ENCODE measurements at regions of chr17 and their contacts with region 1.

Region 1: GRCh38 chr17:2602597-2603017 is 9.2 kb downstream of the PAFAH1B1 start:
- DNase-seq: no peak
- ATAC-seq: peak in 1 of 8 donors; percentile 23
- H3K4me3 ChIP-seq: no peak overlapping the region
- H3K27ac ChIP-seq: no peak overlapping the region
- H3K4me1 ChIP-seq: peaks cover 4 to 84% (median 72%) of the 10 kb centered on the region in 9 donors
- H3K27me3 ChIP-seq: no peaks in the 10 kb centered on the region
- CTCF ChIP-seq: no peak

Region 2: GRCh38 chr17:2468270-2468669 is 134.3 kb before region 1 on chr17:
- intact Hi-C with region 1: no loop called
- DNase-seq: no peak
- ATAC-seq: no peak
- H3K4me3 ChIP-seq: no peak overlapping the region
- H3K27ac ChIP-seq: no peak overlapping the region
- H3K4me1 ChIP-seq: peaks cover 0 to 4% (median 0%) of the 10 kb centered on the region in 9 donors
- H3K27me3 ChIP-seq: no peaks in the 10 kb centered on the region
- CTCF ChIP-seq: no peak

Region 3: DNA sequence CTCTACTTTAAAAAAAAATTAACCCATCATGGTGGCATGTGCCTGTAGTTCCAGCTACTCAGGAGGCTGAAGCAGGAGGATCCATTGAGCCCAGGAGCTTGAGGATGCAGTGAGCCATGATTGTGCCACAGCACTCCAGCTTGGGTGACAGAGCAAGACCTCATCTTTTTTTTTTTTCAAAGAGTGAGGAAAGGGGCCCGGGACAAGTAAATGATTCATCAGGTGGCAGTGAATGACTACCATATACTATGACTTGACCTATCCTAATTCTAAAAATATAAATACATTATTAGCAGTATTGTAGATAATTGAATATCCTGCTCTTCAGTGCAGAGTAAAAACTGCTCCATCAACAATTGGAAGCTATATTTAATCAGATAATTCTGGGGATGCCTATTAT is 53.7 kb after region 1 on chr17:
- intact Hi-C with region 1: loop called in 3 of 10 experiments (anchors 10 kb)
- DNase-seq: no peak
- ATAC-seq: no peak
- H3K4me3 ChIP-seq: no peak overlapping the region
- H3K27ac ChIP-seq: peak overlapping the region in 1 of 10 donors; percentile 21
- H3K4me1 ChIP-seq: peaks cover 0 to 47% (median 12%) of the 10 kb centered on the region in 9 donors
- H3K27me3 ChIP-seq: no peaks in the 10 kb centered on the region
- CTCF ChIP-seq: no peak

Region 4: DNA sequence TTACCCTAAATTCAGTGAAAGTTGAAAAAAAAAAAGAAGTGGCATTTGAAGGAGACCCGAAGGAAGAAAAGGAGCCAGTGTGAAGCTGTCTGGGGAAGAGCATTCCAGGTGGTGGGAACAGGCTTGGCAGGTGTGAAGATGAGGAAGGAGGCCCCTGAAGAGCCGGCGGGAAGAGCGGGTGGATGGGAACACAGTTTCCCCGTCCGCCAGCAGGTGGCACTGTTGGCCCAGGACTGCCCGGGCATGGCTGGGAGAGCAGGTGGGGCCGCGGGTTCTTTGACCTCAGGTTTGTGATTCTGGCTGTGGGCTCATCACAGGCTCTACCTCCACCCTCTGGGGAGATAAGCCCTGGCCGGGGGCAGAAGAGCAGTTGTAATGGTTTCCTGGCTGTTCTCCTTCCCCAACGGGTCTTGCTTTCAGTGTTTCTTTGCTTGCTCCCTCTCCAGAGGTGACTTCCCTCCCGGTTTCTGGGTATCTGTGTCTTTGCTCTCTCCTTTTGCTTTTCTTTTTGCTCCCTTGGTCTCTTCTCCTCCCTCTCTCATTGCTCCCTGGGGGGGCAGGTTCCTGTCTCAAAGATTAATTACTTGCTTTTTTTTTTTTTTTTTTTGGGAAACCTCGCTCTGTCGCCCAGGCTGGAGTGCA is 225.9 kb after region 1 on chr17:
- intact Hi-C with region 1: no loop called
- DNase-seq: peak; percentile 70 to 84
- ATAC-seq: peak; percentile 61 to 89 (median 88)
- H3K4me3 ChIP-seq: no peak overlapping the region
- H3K27ac ChIP-seq: no peak overlapping the region
- H3K4me1 ChIP-seq: peaks cover 0 to 18% (median 3%) of the 10 kb centered on the region in 9 donors
- H3K27me3 ChIP-seq: peaks cover 0 to 7% (median 0%) of the 10 kb centered on the region in 7 donors
- CTCF ChIP-seq: peak; percentile 84 to 96 (median 94)

Measured in heart right ventricle (tissue), 16 donors.